ENCODE measurements at regions of chr13 and their contacts with region 1.

Region 1: GRCh38 chr13:41054212-41054877 is 7.0 kb upstream of the WBP4 start:
- DNase-seq: peak; percentile 27
- CTCF ChIP-seq: peak; percentile 59

Region 2: GRCh38 chr13:41001695-41002094 is 52.6 kb before region 1 on chr13:
- CTCF ChIA-PET with region 1: interaction called, 11 read pairs
- POLR2A ChIA-PET with region 1: no interaction called
- DNase-seq: no peak
- CTCF ChIP-seq: no peak

Region 3: DNA sequence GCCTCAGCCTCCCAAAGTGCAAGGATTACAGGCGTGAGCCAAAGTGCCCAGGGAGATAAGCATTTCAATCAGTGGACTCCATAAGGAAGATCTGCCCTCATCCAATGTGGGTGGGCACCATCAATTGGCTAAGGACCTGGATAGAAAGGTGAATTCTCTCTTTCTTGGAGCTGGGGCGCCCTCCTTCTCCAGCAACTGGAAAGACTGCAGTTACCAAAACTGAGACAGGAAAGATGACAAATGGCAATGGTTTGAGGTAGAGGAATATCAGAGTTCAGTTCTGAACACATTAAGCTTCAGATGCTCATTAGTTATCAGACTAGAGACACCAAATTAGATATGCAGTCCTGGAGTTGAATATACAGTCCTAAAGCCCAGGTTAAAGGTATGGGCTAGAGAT is 24.7 kb before region 1 on chr13:
- CTCF ChIA-PET with region 1: interaction called, 20 read pairs
- POLR2A ChIA-PET with region 1: no interaction called
- DNase-seq: no peak
- CTCF ChIP-seq: no peak

Region 4: DNA sequence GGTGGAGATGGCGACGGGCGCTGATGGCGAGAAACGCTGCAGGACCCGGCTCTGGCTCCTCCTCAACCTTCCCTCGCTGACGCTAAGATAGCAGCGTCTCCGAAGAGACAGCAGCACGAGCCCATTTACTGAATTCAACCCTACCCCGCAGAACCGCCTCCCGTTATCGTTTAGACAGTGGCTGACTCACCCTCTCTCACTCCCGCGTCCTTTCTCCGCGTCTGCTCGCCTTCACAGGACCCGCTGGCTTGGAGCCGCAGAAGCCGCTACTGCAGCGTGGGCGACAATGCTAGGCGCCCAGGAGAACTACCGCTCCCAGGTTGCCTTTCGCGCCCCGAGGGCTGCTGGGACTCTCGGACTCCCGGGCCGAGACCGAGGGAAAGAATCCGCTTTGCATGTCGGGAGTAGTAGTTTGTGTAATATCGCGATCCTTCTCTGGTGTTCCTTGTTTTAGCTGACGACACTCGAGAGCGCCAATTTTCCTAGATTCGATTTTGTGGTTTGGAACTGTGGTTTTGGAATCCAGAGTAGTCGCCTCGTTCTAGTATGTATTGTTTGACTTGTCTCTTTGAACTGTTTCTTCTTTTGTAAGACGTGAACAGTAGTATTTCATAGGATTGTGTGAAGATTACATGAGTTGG is 78.3 kb after region 1 on chr13 and contains the start of gene KBTBD6:
- CTCF ChIA-PET with region 1: no interaction called
- POLR2A ChIA-PET with region 1: no interaction called
- DNase-seq: peak; percentile 92
- CTCF ChIP-seq: no peak

Region 5: GRCh38 chr13:41196620-41197019 is 142.3 kb after region 1 on chr13:
- CTCF ChIA-PET with region 1: interaction called, 10 read pairs
- POLR2A ChIA-PET with region 1: no interaction called
- DNase-seq: no peak
- CTCF ChIP-seq: peak; percentile 31

Region 6: DNA sequence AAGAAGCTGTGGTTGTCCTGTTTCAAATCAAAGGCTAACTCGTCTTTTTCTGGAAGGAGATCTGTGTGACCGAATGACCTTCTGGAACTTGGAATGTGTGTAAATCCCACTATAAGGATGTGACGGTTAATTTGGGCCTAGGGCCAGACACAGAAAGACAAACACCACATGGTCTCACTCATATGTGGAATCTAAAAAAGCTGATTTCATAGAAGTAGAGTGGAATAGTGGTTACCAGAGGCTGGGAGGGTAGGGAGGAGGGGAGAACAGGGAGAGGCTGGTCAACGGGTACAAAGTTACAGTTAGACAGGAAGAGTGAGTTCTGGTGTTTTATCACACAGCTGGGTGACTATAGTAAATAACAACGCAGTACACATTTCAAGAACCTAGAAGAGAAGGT is 363.7 kb after region 1 on chr13:
- CTCF ChIA-PET with region 1: no interaction called
- POLR2A ChIA-PET with region 1: no interaction called
- DNase-seq: no peak
- CTCF ChIP-seq: no peak

Measured in GM10248 (cell line).